Activated B cell treated with CpG ODN at 0.5 μM for 24 hours (primary cell): ENCODE measurements at regions of chr6 and their contacts with region 1.

Region 1: GRCh38 chr6:27902335-27903314 is 9.6 kb downstream of the OR2B2 start:
- DNase-seq: peak; percentile 75
- ATAC-seq: peak; percentile 83
- H3K4me3 Mint-ChIP-seq: peak overlapping the region; percentile 89
- H3K27ac Mint-ChIP-seq: peak overlapping the region; percentile 96
- H3K4me1 Mint-ChIP-seq: peaks cover 10% of the 10 kb centered on the region
- H3K27me3 Mint-ChIP-seq: peaks cover 3% of the 10 kb centered on the region
- CTCF ChIP-seq: no peak

Region 2: GRCh38 chr6:27388293-27389197 is 514.1 kb before region 1 on chr6 and contains the start of gene ZNF391:
- CTCF ChIA-PET with region 1: no interaction called
- POLR2A ChIA-PET with region 1: no interaction called
- intact Hi-C with region 1: loop called (anchors 5 kb)
- DNase-seq: peak; percentile 73
- ATAC-seq: peak; percentile 88
- H3K4me3 Mint-ChIP-seq: peak within 1 kb of the TSS; percentile 97
- H3K27ac Mint-ChIP-seq: peak within 1 kb of the TSS; percentile 95
- H3K4me1 Mint-ChIP-seq: peaks cover 13% of the 10 kb centered on the region
- H3K27me3 Mint-ChIP-seq: no peaks in the 10 kb centered on the region
- CTCF ChIP-seq: no peak
- total RNA-seq, gene ZNF391: 4.8 and 5.9 TPM in 2 replicates

Region 3: GRCh38 chr6:27518881-27519795 is 383.5 kb before region 1 on chr6:
- CTCF ChIA-PET with region 1: no interaction called
- POLR2A ChIA-PET with region 1: no interaction called
- intact Hi-C with region 1: loop called (anchors 2 kb)
- DNase-seq: peak; percentile 48
- ATAC-seq: peak; percentile 72
- H3K4me3 Mint-ChIP-seq: peak overlapping the region; percentile 83
- H3K27ac Mint-ChIP-seq: peak overlapping the region; percentile 82
- H3K4me1 Mint-ChIP-seq: peaks cover 15% of the 10 kb centered on the region
- H3K27me3 Mint-ChIP-seq: peaks cover 30% of the 10 kb centered on the region
- CTCF ChIP-seq: no peak

Region 4: GRCh38 chr6:27785294-27785693 is 117.3 kb before region 1 on chr6:
- CTCF ChIA-PET with region 1: no interaction called
- POLR2A ChIA-PET with region 1: no interaction called
- intact Hi-C with region 1: no loop called
- DNase-seq: no peak
- ATAC-seq: no peak
- H3K4me3 Mint-ChIP-seq: no peak overlapping the region
- H3K27ac Mint-ChIP-seq: no peak overlapping the region
- H3K4me1 Mint-ChIP-seq: no peaks in the 10 kb centered on the region
- H3K27me3 Mint-ChIP-seq: peaks cover 8% of the 10 kb centered on the region
- CTCF ChIP-seq: no peak

Region 5: DNA sequence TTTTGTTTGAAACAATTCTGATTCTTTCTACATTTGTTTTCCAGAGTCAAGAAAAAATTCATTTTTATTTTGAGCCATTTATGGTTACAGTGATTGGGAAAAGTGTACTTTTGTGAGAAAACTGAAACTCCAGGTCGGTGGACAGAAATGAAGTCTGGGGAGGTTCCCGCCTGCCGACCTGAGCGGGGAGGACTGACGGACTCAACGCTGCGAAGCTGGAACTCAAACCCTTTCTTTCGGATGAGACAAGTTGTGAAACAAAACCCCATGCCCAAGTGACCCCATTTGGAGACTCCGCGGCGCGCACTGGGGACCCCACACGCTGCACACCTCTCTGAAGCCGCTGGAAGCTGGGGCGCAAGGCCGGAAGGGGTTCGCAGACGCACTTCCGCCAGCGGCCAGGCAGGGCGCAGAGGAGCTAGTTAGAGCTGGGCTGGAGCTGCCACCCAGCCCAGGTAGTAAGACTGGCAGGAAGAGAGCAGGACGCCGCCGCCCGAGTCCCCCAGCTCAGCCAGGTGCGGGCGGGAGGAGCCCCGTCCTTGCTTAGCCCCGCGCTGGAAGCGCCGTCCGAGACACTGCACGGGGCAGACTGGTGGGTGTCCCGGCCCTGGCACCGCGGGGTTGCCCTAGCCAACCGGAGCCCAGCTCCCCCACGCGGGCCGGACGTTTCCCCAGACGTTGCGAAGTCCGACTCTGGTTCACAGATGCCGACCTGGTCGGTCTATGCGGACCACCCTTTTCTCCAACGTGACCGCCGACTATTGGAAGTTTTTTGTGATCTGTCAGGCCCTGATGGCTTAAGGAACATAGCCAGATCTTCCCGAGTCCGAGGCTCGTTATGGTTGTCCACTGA is 202.0 kb after region 1 on chr6:
- CTCF ChIA-PET with region 1: no interaction called
- POLR2A ChIA-PET with region 1: no interaction called
- intact Hi-C with region 1: loop called (anchors 2 kb)
- DNase-seq: peak; percentile 80
- ATAC-seq: peak; percentile 98
- H3K4me3 Mint-ChIP-seq: peak overlapping the region; percentile 94
- H3K27ac Mint-ChIP-seq: peak overlapping the region; percentile 95
- H3K4me1 Mint-ChIP-seq: peaks cover 10% of the 10 kb centered on the region
- H3K27me3 Mint-ChIP-seq: peaks cover 6% of the 10 kb centered on the region
- CTCF ChIP-seq: no peak

Region 6: DNA sequence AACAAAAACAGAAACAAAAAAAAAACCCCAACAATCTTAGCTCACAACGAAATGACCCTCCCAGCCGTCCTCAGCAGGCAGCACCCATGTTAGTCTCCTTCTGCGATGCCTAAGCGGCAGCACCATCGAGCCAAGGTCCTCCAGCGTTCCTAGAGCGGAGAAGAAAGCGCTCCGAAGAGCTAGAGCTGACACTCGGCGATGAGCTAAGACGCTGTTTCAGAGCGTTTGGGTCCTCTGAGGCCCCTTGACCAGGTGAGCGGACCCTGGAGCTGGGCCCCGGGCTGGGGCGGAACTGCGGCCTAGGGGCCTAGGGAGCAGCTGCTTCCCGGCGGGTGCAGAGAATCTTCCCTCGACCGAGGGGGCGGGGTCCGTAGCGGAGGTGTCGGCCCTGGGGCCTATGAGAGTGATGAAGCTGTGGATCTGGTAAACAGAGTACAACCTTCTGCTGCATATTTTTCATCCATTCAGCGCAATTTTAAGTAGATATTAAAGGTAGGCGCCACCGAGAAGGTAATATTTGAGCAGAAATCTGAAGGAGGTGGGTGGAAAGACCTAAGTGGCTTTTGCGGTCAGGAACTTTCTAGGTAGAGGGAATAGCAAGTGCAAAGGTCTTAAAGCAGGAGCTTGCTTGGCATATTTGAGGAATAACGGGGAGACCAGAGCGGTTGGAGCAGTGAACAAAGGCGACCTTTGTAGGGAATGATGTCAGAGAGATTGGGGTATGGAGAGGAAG is 364.5 kb after region 1 on chr6 and contains the start of gene ZSCAN26:
- CTCF ChIA-PET with region 1: no interaction called
- POLR2A ChIA-PET with region 1: interaction called, 4 read pairs
- intact Hi-C with region 1: loop called (anchors 10 kb)
- DNase-seq: peak; percentile 77
- ATAC-seq: peak; percentile 96
- H3K4me3 Mint-ChIP-seq: no peak within 1 kb of the TSS
- H3K27ac Mint-ChIP-seq: peak within 1 kb of the TSS; percentile 46
- H3K4me1 Mint-ChIP-seq: peaks cover 10% of the 10 kb centered on the region
- H3K27me3 Mint-ChIP-seq: no peaks in the 10 kb centered on the region
- CTCF ChIP-seq: no peak
- total RNA-seq, gene ZSCAN26: 16.0 and 17.8 TPM in 2 replicates

Region 7: DNA sequence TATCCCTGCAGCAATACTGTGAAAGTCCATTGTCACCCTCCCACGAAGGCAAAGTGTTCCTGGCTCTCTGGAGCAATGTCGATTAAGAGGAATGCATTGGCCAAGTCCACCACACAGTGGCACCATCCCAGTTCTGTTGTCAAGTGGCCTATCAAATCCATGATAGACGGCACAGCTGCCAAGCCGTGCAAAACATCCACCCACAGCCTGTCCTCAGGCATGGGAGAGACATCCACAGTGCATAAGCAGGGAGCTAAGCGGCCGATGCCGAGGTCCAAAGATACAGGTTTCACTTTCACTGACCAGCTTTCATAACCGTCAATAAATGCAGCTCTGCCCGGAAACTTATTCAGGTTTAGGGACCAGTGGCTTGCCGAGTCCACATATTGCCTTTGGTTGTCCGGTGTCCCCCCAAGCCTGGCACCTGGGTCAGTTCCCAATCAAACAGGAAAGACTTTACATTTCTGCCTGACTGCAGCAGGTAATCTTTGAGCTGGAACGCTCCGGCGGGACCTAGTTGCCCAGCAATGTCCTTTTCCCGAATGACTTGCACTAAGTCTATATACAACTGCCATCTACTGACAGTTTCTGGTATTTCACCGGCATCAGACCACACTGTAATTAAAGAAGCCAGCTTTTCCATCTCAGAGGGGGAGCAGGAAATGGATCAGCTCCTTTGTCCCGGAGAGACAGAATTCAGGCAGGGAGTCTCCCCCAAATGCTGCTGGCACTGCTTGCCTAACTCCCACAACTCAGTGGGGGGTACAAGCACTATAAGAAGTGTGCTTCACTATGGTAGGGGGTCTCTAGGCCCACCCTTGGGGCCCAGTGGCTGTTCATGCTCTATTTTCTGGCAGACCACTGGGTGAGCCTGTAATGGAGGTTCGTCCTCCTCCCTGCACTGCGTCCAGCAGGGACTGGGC is 453.4 kb after region 1 on chr6:
- CTCF ChIA-PET with region 1: interaction called, 4 read pairs
- POLR2A ChIA-PET with region 1: no interaction called
- intact Hi-C with region 1: loop called (anchors 2 kb)
- DNase-seq: peak; percentile 41
- ATAC-seq: peak; percentile 85
- H3K4me3 Mint-ChIP-seq: peak overlapping the region; percentile 91
- H3K27ac Mint-ChIP-seq: peak overlapping the region; percentile 71
- H3K4me1 Mint-ChIP-seq: peaks cover 21% of the 10 kb centered on the region
- H3K27me3 Mint-ChIP-seq: no peaks in the 10 kb centered on the region
- CTCF ChIP-seq: peak; percentile 82